GM12878 (cell line): ENCODE measurements at regions of chr1 and their contacts with region 1.

Region 1: DNA sequence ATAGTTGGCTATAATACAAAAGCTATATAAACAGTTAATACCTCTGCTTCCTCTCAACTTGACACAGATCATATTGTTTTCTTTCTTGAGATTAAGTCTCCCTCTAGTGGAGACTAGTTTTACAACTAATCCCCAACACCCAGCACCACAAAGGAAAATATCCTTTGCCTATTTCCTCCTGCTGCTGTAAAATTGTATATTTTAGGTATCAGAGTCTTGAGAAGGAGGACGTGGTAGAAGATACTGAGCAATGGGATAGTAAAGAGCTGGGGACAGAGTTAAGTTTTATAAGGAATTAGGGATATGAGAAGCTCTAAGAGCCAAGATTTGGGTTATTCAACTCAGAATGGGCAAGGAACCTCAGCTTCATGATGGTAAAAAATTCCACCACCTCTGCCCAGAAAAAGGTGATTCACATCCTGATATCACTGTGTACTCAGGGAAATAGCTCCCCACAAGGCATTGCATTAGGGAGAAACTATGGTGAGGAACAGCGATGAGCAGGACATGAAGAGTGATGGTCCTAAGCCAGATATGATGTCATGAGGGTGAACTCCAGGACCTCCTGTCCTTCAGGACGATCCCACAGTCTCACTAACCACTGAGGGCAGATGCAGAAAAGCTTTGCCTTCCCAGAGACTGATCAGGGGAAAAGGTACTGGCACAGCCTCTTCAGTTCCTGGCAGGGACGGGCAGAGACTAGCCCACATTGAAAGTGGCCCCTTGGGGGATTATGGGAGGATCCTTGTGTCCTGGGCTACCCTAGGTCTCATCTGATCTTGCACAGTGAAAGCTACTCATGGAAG is 14.7 kb upstream of the CFAP126 start:
- DNase-seq: no peak
- ATAC-seq: peak; percentile 94
- H3K4me3 ChIP-seq: no peak overlapping the region
- H3K27ac ChIP-seq: no peak overlapping the region
- H3K4me1 ChIP-seq: peaks cover 14% of the 10 kb centered on the region; the same call in 1 of the 2 replicates
- H3K27me3 ChIP-seq: no peaks in the 10 kb centered on the region
- CTCF ChIP-seq: peak; percentile 39 to 75 (median 54); a peak in 5 of 6 replicates
- EP300 ChIP-seq: no peak
- POLR2A ChIP-seq: no peak
- RAD21 ChIP-seq: peak; percentile 78

Region 2: GRCh38 chr1:161165742-161166668 is 216.4 kb before region 1 on chr1 and contains the start of gene PPOX:
- CTCF ChIA-PET with region 1: interaction called, 41 read pairs
- POLR2A ChIA-PET with region 1: interaction called, 7 read pairs
- RAD21 ChIA-PET with region 1: interaction called, 34 read pairs
- SMC1A ChIA-PET with region 1: interaction called, 9 read pairs
- in situ Hi-C with region 1: no loop called
- intact Hi-C with region 1: no loop called
- DNase-seq: peak; percentile 92
- ATAC-seq: peak; percentile 97
- H3K4me3 ChIP-seq: peak within 1 kb of the TSS; percentile 86
- H3K27ac ChIP-seq: peak within 1 kb of the TSS; percentile 54
- H3K4me1 ChIP-seq: peaks cover 8% of the 10 kb centered on the region
- H3K27me3 ChIP-seq: no peaks in the 10 kb centered on the region
- CTCF ChIP-seq: peak; percentile 50 to 67 (median 61)
- EP300 ChIP-seq: no peak; a peak in 1 of 4 replicates
- POLR2A ChIP-seq: peak; percentile 88
- RAD21 ChIP-seq: peak; percentile 26; the same call in 1 of the 2 replicates
- polyA plus RNA-seq, gene PPOX: 8.9 to 16.3 TPM

Region 3: GRCh38 chr1:161201828-161202725 is 180.3 kb before region 1 on chr1 and contains the start of gene NDUFS2:
- CTCF ChIA-PET with region 1: interaction called, 53 read pairs
- POLR2A ChIA-PET with region 1: no interaction called
- RAD21 ChIA-PET with region 1: interaction called, 11 read pairs
- SMC1A ChIA-PET with region 1: interaction called, 62 read pairs
- in situ Hi-C with region 1: no loop called
- intact Hi-C with region 1: loop called (anchors 5 kb)
- DNase-seq: peak; percentile 94
- ATAC-seq: peak; percentile 99
- H3K4me3 ChIP-seq: peak within 1 kb of the TSS; percentile 95
- H3K27ac ChIP-seq: peak within 1 kb of the TSS; percentile 86
- H3K4me1 ChIP-seq: peaks cover 21% of the 10 kb centered on the region
- H3K27me3 ChIP-seq: no peaks in the 10 kb centered on the region
- CTCF ChIP-seq: peak in 1 of 3 experiments; percentile 5; a peak in 2 of 6 replicates
- EP300 ChIP-seq: no peak
- POLR2A ChIP-seq: peak; percentile 96
- RAD21 ChIP-seq: no peak
- polyA plus RNA-seq, gene NDUFS2: 66.5 to 93.9 TPM

Region 4: GRCh38 chr1:161235957-161236773 is 146.3 kb before region 1 on chr1:
- CTCF ChIA-PET with region 1: interaction called, 204 read pairs
- POLR2A ChIA-PET with region 1: no interaction called
- RAD21 ChIA-PET with region 1: interaction called, 4 read pairs
- SMC1A ChIA-PET with region 1: interaction called, 8 read pairs
- in situ Hi-C with region 1: no loop called
- intact Hi-C with region 1: no loop called
- DNase-seq: no peak
- ATAC-seq: no peak
- H3K4me3 ChIP-seq: no peak overlapping the region
- H3K27ac ChIP-seq: no peak overlapping the region
- H3K4me1 ChIP-seq: no peaks in the 10 kb centered on the region
- H3K27me3 ChIP-seq: no peaks in the 10 kb centered on the region
- CTCF ChIP-seq: no peak
- EP300 ChIP-seq: no peak
- POLR2A ChIP-seq: no peak
- RAD21 ChIP-seq: no peak

Region 5: GRCh38 chr1:161305867-161306519 is 76.4 kb before region 1 on chr1:
- CTCF ChIA-PET with region 1: interaction called, 11 read pairs
- POLR2A ChIA-PET with region 1: no interaction called
- RAD21 ChIA-PET with region 1: interaction called, 3 read pairs
- SMC1A ChIA-PET with region 1: interaction called, 5 read pairs
- in situ Hi-C with region 1: no loop called
- intact Hi-C with region 1: loop called (anchors 5 kb)
- DNase-seq: peak; percentile 65
- ATAC-seq: peak; percentile 92
- H3K4me3 ChIP-seq: peak overlapping the region; percentile 94
- H3K27ac ChIP-seq: peak overlapping the region; percentile 13; the same call in 1 of the 2 replicates
- H3K4me1 ChIP-seq: peaks cover 12% of the 10 kb centered on the region
- H3K27me3 ChIP-seq: no peaks in the 10 kb centered on the region
- CTCF ChIP-seq: peak; percentile 41 to 51 (median 51); a peak in 5 of 6 replicates
- EP300 ChIP-seq: no peak
- POLR2A ChIP-seq: peak; percentile 77
- RAD21 ChIP-seq: peak; percentile 38; the same call in 1 of the 2 replicates

Region 6: DNA sequence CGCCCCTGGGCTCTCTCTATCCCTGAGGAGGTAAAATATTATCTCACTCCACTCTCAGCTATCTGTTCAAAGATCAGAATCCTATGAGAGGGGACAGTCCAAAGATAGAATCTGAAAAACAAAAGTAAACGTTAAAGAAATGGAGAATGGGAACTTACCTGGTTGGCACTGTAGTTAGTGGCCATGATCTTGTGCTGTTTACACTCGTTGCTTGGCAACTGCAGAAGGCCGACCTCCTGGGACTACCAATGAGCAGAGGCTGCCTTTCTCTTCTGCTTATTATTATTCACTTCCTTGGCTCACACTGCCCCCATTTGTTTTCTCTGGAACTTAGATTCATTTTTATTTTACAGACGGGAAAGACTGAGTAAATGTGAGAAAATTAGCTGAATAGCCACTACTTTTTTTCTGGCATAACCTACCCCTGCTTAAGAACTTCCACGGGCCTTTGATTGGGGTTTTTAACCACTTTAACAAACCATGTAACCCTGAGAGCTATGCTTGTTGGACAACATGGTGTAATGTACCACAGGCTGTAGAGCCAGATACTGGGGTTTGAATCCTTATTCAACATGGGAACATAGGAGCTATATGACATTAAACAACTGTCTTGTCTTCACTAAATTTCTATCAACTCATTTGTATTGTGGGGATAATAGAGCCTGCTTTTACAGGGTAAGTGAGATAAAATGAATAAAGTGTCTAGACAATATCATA is 14.6 kb before region 1 on chr1 and contains the start of gene CFAP126:
- CTCF ChIA-PET with region 1: interaction called, 45 read pairs
- POLR2A ChIA-PET with region 1: no interaction called
- RAD21 ChIA-PET with region 1: interaction called, 9 read pairs
- SMC1A ChIA-PET with region 1: interaction called, 13 read pairs
- in situ Hi-C with region 1: no loop called
- intact Hi-C with region 1: no loop called
- DNase-seq: peak; percentile 35
- ATAC-seq: peak; percentile 100
- H3K4me3 ChIP-seq: no peak within 1 kb of the TSS
- H3K27ac ChIP-seq: no peak within 1 kb of the TSS; the same call in 1 of the 2 replicates
- H3K4me1 ChIP-seq: no peaks in the 10 kb centered on the region; the same call in 1 of the 2 replicates
- H3K27me3 ChIP-seq: no peaks in the 10 kb centered on the region
- CTCF ChIP-seq: peak in 2 of 3 experiments; percentile 19 to 49; a peak in 2 of 6 replicates
- EP300 ChIP-seq: no peak
- POLR2A ChIP-seq: no peak
- RAD21 ChIP-seq: peak; percentile 48
- polyA plus RNA-seq, gene CFAP126: not detected